ENCODE measurements at regions of chr14 and their contacts with region 1.

Region 1: GRCh38 chr14:20332788-20333493 is at the start of gene CCNB1IP1:
- DNase-seq: peak in 8 of 9 experiments; percentile 20 to 91 (median 50)
- ATAC-seq: peak; percentile 98
- H3K4me3 ChIP-seq: peak within 1 kb of the TSS; percentile 56 to 72
- H3K4me3 Mint-ChIP-seq: peak within 1 kb of the TSS; percentile 93
- H3K27ac ChIP-seq: peak within 1 kb of the TSS; percentile 49 to 73
- H3K27ac Mint-ChIP-seq: peak within 1 kb of the TSS; percentile 88
- H3K4me1 ChIP-seq: peaks cover 7% of the 10 kb centered on the region
- H3K4me1 Mint-ChIP-seq: peaks cover 30% of the 10 kb centered on the region
- H3K27me3 ChIP-seq: no peaks in the 10 kb centered on the region
- H3K27me3 Mint-ChIP-seq: no peaks in the 10 kb centered on the region
- CTCF ChIP-seq: no peak
- total RNA-seq, gene CCNB1IP1: 26.9 to 28.0 TPM

Region 2: DNA sequence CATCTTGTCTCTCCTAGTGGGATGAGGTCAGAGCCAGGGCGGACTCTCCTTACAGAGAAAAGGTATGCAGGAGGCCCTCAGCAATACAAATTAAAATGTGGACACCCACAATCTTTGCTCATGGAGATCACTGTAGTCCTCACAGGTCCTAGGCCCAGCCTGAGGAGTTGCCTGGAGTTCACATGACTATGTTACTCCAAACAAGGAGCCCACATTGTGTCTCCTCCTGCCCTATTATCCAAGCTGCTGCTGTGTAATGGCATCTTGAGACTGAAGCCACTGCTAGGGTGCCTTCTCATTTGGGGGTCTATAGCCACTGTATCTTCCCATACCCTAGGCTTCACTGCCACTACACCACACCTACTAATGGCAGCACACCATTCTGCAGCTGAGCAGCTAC is 391.3 kb before region 1 on chr14:
- CTCF ChIA-PET with region 1: no interaction called
- POLR2A ChIA-PET with region 1: no interaction called
- intact Hi-C with region 1: no loop called
- DNase-seq: no peak
- ATAC-seq: no peak
- H3K4me3 ChIP-seq: no peak overlapping the region
- H3K4me3 Mint-ChIP-seq: no peak overlapping the region
- H3K27ac ChIP-seq: no peak overlapping the region
- H3K27ac Mint-ChIP-seq: no peak overlapping the region
- H3K4me1 ChIP-seq: no peaks in the 10 kb centered on the region
- H3K4me1 Mint-ChIP-seq: no peaks in the 10 kb centered on the region
- H3K27me3 ChIP-seq: no peaks in the 10 kb centered on the region
- H3K27me3 Mint-ChIP-seq: no peaks in the 10 kb centered on the region
- CTCF ChIP-seq: no peak

Region 3: GRCh38 chr14:20305265-20306078 is 27.5 kb before region 1 on chr14 and contains the start of gene TTC5:
- CTCF ChIA-PET with region 1: interaction called, 8 read pairs
- POLR2A ChIA-PET with region 1: no interaction called
- intact Hi-C with region 1: loop called in 1 of 2 experiments (anchors 1 kb)
- DNase-seq: peak; percentile 87 to 95 (median 90)
- ATAC-seq: peak; percentile 99
- H3K4me3 ChIP-seq: peak within 1 kb of the TSS; percentile 62 to 77
- H3K4me3 Mint-ChIP-seq: peak within 1 kb of the TSS; percentile 91
- H3K27ac ChIP-seq: peak within 1 kb of the TSS; percentile 48 to 59
- H3K27ac Mint-ChIP-seq: peak within 1 kb of the TSS; percentile 90
- H3K4me1 ChIP-seq: peaks cover 16% of the 10 kb centered on the region
- H3K4me1 Mint-ChIP-seq: peaks cover 32% of the 10 kb centered on the region
- H3K27me3 ChIP-seq: no peaks in the 10 kb centered on the region
- H3K27me3 Mint-ChIP-seq: no peaks in the 10 kb centered on the region
- CTCF ChIP-seq: peak; percentile 93
- total RNA-seq, gene TTC5: 9.2 to 9.9 TPM

Measured in CD8-positive, alpha-beta T cell (primary cell).